ENCODE measurements at regions of chr19 and their contacts with region 1.

Region 1: GRCh38 chr19:48795055-48795684 is 15.7 kb downstream of the BCAT2 start:
- DNase-seq: peak; percentile 91
- H3K4me3 ChIP-seq: peak overlapping the region; percentile 70
- H3K27ac ChIP-seq: peak overlapping the region; percentile 84
- H3K4me1 ChIP-seq: peaks cover 15% of the 10 kb centered on the region
- H3K27me3 ChIP-seq: no peaks in the 10 kb centered on the region
- CTCF ChIP-seq: peak; percentile 97

Region 2: GRCh38 chr19:48835734-48836088 is 40.5 kb after region 1 on chr19:
- intact Hi-C with region 1: loop called (anchors 2 kb)
- DNase-seq: peak; percentile 92
- H3K4me3 ChIP-seq: peak overlapping the region; percentile 58
- H3K27ac ChIP-seq: peak overlapping the region; percentile 73
- H3K4me1 ChIP-seq: peaks cover 19% of the 10 kb centered on the region
- H3K27me3 ChIP-seq: no peaks in the 10 kb centered on the region
- CTCF ChIP-seq: peak; percentile 95